CD4-positive, alpha-beta memory T cell (primary cell): ENCODE measurements at regions of chr6 and their contacts with region 1.

Region 1: DNA sequence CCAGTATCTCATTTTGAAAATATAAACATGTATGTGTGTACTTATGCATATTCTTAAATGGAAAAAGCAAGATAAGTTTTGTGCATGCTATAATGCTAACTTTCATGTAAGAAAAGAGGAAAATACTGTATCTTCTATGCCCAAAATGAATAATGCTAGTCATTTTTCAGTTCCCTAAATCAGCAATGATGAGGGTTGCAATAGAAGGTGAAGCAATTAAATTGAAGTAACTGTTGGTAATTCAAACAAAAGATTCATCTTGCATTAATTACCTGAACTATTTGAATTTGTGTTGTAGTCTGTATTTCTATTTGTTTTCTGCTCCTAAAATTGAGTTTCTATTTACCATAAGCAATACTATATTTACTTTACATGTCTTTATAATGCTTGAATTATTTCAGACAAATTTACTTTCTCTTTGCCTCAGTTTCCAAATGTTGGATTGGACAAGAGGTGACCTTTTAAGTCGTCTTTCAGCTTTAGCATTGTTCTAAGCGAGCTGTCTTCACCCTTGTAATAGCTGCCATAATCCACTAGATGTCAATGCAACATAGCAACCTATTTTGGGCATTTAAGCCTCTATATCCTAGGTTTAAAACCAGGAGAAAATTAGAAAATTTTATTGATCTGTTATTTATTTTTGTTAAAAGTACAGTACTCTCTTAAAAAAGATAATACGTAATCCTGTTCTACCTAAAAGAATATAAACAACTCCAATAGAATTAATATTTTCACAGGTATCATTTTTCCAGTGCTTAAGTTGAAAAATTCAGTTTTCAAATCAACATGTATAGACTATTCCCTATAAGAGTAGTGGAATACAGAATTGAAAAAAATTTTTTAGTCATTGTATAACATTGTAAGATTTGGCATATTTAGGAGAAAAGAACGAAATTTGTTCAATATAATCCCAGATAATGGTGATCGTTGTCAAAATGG is 52.3 kb upstream of the IFNGR1 start:
- DNase-seq: peak in 4 of 5 donors; percentile 26 to 36 (median 33)
- H3K4me3 ChIP-seq: no peak overlapping the region
- H3K4me3 Mint-ChIP-seq: no peak overlapping the region
- H3K27ac ChIP-seq: no peak overlapping the region
- H3K27ac Mint-ChIP-seq: no peak overlapping the region
- H3K4me1 ChIP-seq: peaks cover 6% of the 10 kb centered on the region
- H3K4me1 Mint-ChIP-seq: peaks cover 2 to 19% (median 12%) of the 10 kb centered on the region in 4 donors
- H3K27me3 ChIP-seq: no peaks in the 10 kb centered on the region
- H3K27me3 Mint-ChIP-seq: no peaks in the 10 kb centered on the region

Region 2: GRCh38 chr6:137475103-137475502 is 203.6 kb after region 1 on chr6:
- CTCF ChIA-PET with region 1: no interaction called
- POLR2A ChIA-PET with region 1: no interaction called
- intact Hi-C with region 1: loop called (anchors 1 kb)
- DNase-seq: no peak
- H3K4me3 ChIP-seq: no peak overlapping the region
- H3K4me3 Mint-ChIP-seq: no peak overlapping the region
- H3K27ac ChIP-seq: no peak overlapping the region
- H3K27ac Mint-ChIP-seq: no peak overlapping the region
- H3K4me1 ChIP-seq: no peaks in the 10 kb centered on the region
- H3K4me1 Mint-ChIP-seq: no peaks in the 10 kb centered on the region
- H3K27me3 ChIP-seq: peaks cover 3% of the 10 kb centered on the region
- H3K27me3 Mint-ChIP-seq: peaks cover 9 to 17% of the 10 kb centered on the region in 2 donors